Cardiac septum (tissue), 1 donor: ENCODE measurements at regions of chr1 and their contacts with region 1.

Region 1: GRCh38 chr1:61426254-61426653 is 298.7 kb downstream of the TM2D1 start:
- DNase-seq: no peak

Region 2: DNA sequence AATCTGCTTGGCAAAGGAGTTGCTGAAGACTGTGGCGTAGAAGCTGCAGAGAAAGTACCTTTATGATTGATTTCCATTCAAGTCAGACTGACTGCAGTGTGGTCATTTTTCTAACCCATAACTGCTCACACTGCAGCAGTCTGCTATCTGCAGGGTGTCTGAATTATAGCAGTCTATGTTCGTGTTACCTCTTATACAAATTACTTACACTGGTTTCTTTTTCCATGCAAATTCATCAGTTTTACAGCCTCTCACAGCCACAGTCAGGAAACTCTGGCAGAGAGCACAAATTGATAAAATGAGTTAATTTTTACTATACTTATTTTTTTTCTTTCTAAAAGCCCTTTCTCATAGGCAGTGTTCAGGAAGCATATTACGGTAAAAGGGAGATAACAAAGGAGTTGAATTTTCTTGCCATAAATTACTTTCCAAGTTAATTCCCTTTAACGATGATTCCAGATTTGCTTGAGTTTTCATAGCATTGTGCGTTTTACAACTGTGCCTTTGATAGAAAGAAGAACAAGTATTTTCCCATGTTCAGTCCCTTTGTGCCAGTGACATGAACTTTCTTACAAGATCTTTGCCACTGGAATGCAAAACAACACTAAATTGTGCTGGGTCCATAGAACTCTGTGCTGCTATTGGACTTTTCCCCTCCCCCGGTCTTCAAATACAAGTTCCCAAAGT is 82.4 kb before region 1 on chr1:
- intact Hi-C with region 1: no loop called
- DNase-seq: no peak

Region 3: DNA sequence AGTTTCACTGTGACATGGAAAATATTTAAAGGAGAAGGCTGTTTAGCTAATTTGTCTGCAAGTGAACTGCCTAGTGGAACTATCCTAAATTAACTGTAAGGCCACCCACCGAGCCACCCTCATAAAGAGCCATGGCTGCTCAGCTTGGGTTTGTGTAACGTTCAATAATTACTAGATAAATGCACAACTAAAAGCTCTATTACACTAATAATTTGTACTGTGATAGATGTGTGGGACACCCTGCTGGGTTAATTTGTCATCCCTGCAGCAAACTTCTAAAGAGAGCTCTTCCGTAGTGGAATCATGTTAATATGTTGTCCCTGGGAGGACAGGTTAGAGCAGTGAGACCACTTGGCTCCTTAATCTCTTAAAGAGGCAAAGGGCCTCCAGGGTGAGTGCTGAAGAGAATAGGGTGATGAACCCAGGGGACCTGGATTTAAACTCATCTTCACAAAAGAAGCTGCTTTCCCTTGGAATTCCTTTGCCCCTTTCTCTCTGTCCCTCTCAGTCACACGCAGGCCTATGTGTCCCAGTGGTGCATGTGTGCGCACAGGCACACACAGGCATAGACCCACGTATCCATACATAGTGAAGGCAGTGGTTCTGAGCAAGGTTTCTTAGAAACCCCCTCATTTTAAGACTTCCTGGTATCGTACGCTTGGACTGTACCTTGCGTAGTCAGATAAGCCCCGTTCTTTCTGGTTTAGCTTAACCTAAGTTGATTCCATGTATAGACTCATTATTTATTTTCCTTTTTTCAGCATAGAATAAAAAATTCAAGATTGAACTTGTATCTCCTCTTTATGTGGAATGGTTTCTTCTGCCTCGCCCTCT is 33.6 kb before region 1 on chr1:
- intact Hi-C with region 1: loop called (anchors 5 kb)
- DNase-seq: no peak